MCF 10A (cell line): ENCODE measurements at regions of chr7 and their contacts with region 1.

Region 1: GRCh38 chr7:27143023-27143949 is at the start of gene HOXA5:
- DNase-seq: peak; percentile 99
- H3K4me3 Mint-ChIP-seq: peak within 1 kb of the TSS; percentile 100
- H3K27ac Mint-ChIP-seq: peak within 1 kb of the TSS; percentile 99
- H3K4me1 Mint-ChIP-seq: peaks cover 31% of the 10 kb centered on the region
- H3K27me3 Mint-ChIP-seq: no peaks in the 10 kb centered on the region
- CTCF ChIP-seq: peak; percentile 93
- total RNA-seq, gene HOXA5: 7.4 and 8.8 TPM in 2 replicates

Region 2: DNA sequence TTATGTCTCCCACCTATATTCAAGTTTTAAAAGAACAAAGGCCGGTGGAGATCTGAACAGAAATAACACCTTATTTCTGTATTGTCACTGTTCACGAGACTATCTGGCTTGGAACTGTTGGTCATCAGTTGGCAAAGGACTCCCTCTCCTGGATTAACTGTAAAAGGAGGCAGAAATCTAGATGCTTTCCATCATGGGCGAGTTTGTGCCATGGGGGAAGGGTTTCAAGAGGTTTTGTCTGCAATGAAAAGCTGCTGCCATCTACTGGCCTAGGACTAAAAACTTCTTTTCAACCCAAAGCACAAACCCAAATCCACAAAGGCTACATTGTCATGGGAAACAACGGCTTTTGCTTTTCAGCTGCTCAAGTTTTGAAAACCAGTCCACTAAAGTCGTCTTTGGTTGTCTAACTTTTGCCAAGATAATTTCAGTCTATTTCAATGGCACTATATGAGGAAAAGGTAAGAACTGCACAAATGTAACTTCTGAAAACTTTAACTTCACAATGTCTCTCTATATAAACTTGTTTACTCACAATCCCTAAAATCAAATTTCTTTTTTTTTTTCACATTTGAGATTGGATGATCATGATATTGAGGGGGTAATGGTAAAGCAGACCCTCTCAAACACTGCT is 475.7 kb before region 1 on chr7:
- CTCF ChIA-PET with region 1: interaction called, 7 read pairs
- POLR2A ChIA-PET with region 1: interaction called, 16 read pairs
- intact Hi-C with region 1: loop called (anchors 5 kb)
- DNase-seq: peak; percentile 96
- H3K4me3 Mint-ChIP-seq: no peak overlapping the region
- H3K27ac Mint-ChIP-seq: no peak overlapping the region
- H3K4me1 Mint-ChIP-seq: peaks cover 16% of the 10 kb centered on the region
- H3K27me3 Mint-ChIP-seq: no peaks in the 10 kb centered on the region
- CTCF ChIP-seq: peak; percentile 90

Region 3: GRCh38 chr7:26853788-26854393 is 289.4 kb before region 1 on chr7:
- CTCF ChIA-PET with region 1: interaction called, 190 read pairs
- POLR2A ChIA-PET with region 1: interaction called, 459 read pairs
- intact Hi-C with region 1: no loop called
- DNase-seq: peak; percentile 78
- H3K4me3 Mint-ChIP-seq: peak overlapping the region; percentile 17
- H3K27ac Mint-ChIP-seq: peak overlapping the region; percentile 96
- H3K4me1 Mint-ChIP-seq: peaks cover 33% of the 10 kb centered on the region
- H3K27me3 Mint-ChIP-seq: no peaks in the 10 kb centered on the region
- CTCF ChIP-seq: peak; percentile 52

Region 4: DNA sequence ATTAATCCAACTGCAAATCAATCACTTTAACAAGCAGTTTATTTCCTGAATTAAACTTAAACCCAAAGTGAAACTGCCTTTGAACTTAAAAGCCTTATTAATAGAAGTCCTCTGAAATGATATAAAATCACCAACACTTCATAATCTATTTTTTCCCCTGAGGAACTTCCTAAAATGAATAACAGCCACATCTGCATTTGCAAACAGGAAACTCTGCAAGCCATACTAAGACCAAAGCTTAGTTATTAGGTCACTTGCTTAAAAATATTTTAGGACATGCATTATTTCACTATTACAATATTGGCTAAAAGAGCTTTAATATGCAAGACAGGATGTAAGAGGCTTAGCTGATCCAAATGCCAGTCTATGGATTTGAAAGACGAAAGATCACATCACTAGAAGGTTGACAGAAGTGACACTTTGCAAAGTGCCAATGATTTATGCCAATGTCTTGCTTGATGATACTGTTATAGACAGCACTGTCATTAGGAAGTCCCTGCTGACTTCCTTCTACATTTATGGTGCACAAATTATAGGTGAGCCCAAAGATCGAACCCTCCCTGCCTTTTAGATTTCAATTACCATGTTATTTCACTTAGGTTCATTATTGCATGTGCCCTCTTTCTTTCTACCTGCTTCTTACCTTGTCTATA is 179.0 kb before region 1 on chr7:
- CTCF ChIA-PET with region 1: no interaction called
- POLR2A ChIA-PET with region 1: no interaction called
- intact Hi-C with region 1: no loop called
- DNase-seq: no peak
- H3K4me3 Mint-ChIP-seq: no peak overlapping the region
- H3K27ac Mint-ChIP-seq: no peak overlapping the region
- H3K4me1 Mint-ChIP-seq: peaks cover 4% of the 10 kb centered on the region
- H3K27me3 Mint-ChIP-seq: no peaks in the 10 kb centered on the region
- CTCF ChIP-seq: no peak

Region 5: GRCh38 chr7:27112955-27113949 is 30.0 kb before region 1 on chr7:
- CTCF ChIA-PET with region 1: interaction called, 8 read pairs
- POLR2A ChIA-PET with region 1: interaction called, 129 read pairs
- intact Hi-C with region 1: no loop called
- DNase-seq: peak; percentile 93
- H3K4me3 Mint-ChIP-seq: peak overlapping the region; percentile 80
- H3K27ac Mint-ChIP-seq: peak overlapping the region; percentile 90
- H3K4me1 Mint-ChIP-seq: peaks cover 25% of the 10 kb centered on the region
- H3K27me3 Mint-ChIP-seq: no peaks in the 10 kb centered on the region
- CTCF ChIP-seq: no peak

Region 6: DNA sequence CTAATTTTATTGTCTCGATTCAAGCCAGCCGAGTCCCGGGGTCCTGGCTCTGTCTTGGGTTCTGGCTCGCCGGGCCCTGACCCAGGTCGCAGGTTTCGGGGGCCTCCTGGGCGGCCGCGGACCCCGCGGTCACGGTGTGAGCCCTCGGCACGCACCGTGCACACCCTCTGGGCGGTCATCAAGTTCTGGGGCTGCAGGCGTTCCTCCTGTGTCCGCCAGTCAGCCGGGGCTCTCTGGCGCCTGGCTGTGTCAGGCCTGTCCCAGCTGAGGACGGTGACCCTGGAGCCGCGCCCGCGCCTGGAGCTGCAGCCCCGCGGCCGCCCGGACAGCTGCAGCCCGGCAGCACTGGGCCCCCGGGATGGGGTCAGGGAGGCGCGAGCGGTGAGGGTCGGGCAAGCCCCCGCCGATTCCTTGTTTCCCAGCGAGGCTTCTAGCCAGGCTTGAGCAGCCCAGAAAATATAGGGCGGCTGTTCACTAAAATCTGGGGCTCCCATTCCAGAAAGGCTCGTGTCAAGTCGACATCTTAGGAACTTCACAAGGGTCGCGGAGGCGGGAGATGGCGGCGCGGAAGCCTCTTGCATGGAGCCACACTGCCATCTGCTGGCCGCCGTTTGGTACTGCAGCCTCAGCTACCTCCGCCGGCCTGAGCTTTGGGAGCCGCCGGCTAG is 17.4 kb after region 1 on chr7:
- CTCF ChIA-PET with region 1: interaction called, 57 read pairs
- POLR2A ChIA-PET with region 1: interaction called, 65 read pairs
- intact Hi-C with region 1: no loop called
- DNase-seq: peak; percentile 83
- H3K4me3 Mint-ChIP-seq: peak overlapping the region; percentile 84
- H3K27ac Mint-ChIP-seq: no peak overlapping the region
- H3K4me1 Mint-ChIP-seq: peaks cover 8% of the 10 kb centered on the region
- H3K27me3 Mint-ChIP-seq: no peaks in the 10 kb centered on the region
- CTCF ChIP-seq: peak; percentile 96